Mammary epithelial cell (primary cell): ENCODE measurements at regions of chr16 and their contacts with region 1.

Region 1: DNA sequence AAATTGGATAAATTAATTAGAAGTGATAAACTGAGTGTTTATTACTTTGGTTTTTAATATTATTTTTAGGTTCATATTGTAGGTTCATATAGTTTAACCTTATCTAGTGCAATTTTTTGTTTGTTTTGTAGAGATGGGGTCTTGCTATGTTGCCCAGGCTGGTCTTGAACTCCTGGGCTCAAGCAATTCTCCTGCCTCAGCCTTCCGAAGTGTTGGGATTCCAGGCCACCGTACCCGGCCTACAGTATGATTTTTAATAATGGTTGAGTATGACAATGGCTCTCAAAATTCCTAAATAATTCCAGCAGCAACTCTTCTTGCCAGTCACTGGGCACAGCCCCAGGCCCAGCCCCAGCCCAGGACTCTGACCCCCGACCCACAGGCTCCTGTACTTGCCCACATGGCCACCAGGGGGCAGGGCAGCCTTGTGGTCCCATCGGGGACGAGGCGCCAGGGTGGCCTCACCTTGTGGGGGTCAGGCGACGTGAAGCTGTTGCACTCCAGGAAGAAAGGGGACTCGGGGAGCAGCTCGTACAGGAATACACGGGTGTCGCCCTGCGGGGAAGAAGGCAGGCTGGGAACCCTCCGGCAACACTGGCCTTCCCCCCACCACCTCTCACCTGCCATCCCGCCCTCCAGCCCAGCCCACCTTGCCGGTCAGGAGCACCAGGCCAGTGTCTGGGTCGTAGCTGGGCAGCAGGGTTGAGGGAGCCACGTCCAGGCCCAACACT is 7.9 kb upstream of the PAM16 start:
- DNase-seq: no peak
- H3K4me3 ChIP-seq: no peak overlapping the region
- H3K27ac ChIP-seq: no peak overlapping the region
- H3K4me1 ChIP-seq: no peaks in the 10 kb centered on the region
- H3K27me3 ChIP-seq: no peaks in the 10 kb centered on the region
- CTCF ChIP-seq: peak; percentile 71 to 95

Region 2: GRCh38 chr16:4123616-4124265 is 235.3 kb before region 1 on chr16:
- CTCF ChIA-PET with region 1: no interaction called
- dilution Hi-C with region 1: no loop called
- in situ Hi-C with region 1: no loop called
- intact Hi-C with region 1: no loop called
- DNase-seq: no peak
- H3K4me3 ChIP-seq: no peak overlapping the region
- H3K27ac ChIP-seq: no peak overlapping the region
- H3K4me1 ChIP-seq: no peaks in the 10 kb centered on the region
- H3K27me3 ChIP-seq: no peaks in the 10 kb centered on the region
- CTCF ChIP-seq: no peak

Region 3: DNA sequence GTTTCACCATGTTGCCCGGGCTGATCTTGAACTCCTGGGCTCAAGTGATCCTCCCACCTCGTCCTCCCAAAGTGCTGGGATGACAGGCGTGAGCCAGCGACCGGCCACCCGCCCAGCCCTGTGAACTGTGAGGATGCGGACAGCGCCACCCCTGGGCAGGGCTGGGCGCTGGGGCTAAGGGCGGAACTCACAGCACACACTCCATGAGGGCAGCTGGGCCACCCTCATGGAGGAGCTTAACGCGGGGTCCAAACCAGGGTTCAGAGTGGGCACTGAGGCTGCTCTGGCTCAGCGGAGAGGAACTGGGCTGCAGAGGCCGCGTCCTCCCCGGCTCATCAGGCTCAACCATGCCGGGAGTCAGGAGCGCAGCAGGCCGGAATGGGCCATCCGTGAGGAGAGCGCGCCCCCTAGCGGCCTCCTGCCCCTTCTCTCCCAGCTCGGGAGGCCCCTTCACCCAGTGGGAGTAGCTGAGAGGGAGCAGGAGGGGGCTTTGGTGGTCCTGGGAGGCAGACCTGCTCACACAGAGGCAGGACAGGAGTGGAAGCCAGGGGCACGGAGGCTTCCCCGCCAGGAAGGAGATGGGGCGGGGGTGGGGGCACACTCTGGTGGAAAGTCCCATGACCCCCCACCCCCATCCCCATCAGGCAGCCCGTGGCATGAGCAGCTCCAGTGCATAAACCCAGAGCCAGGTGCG is 43.6 kb after region 1 on chr16:
- CTCF ChIA-PET with region 1: no interaction called
- dilution Hi-C with region 1: no loop called
- in situ Hi-C with region 1: loop called (anchors 5 kb)
- intact Hi-C with region 1: loop called (anchors 1 kb)
- DNase-seq: peak; percentile 53
- H3K4me3 ChIP-seq: peak overlapping the region in 1 of 3 experiments; percentile 22
- H3K27ac ChIP-seq: no peak overlapping the region
- H3K4me1 ChIP-seq: peaks cover 4% of the 10 kb centered on the region
- H3K27me3 ChIP-seq: no peaks in the 10 kb centered on the region
- CTCF ChIP-seq: peak; percentile 57 to 88

Region 4: GRCh38 chr16:4505356-4506147 is 146.6 kb after region 1 on chr16:
- CTCF ChIA-PET with region 1: no interaction called
- dilution Hi-C with region 1: no loop called
- in situ Hi-C with region 1: no loop called
- intact Hi-C with region 1: no loop called
- DNase-seq: no peak
- H3K4me3 ChIP-seq: no peak overlapping the region
- H3K27ac ChIP-seq: no peak overlapping the region
- H3K4me1 ChIP-seq: peaks cover 16% of the 10 kb centered on the region
- H3K27me3 ChIP-seq: no peaks in the 10 kb centered on the region
- CTCF ChIP-seq: no peak

Region 5: GRCh38 chr16:4616047-4616811 is 257.2 kb after region 1 on chr16:
- CTCF ChIA-PET with region 1: no interaction called
- dilution Hi-C with region 1: no loop called
- in situ Hi-C with region 1: no loop called
- intact Hi-C with region 1: no loop called
- DNase-seq: peak; percentile 99
- H3K4me3 ChIP-seq: peak overlapping the region; percentile 56 to 68 (median 59)
- H3K27ac ChIP-seq: peak overlapping the region; percentile 52
- H3K4me1 ChIP-seq: peaks cover 53% of the 10 kb centered on the region
- H3K27me3 ChIP-seq: no peaks in the 10 kb centered on the region
- CTCF ChIP-seq: peak in 1 of 2 donors; percentile 31